Dendritic cell treated with granulocyte-macrophage colony-stimulating factor and Interleukin-4, amounts not matched to agents 40 ng/mL and 50 ng/mL, for 4 days (primary cell): ENCODE measurements at regions of chr13 and their contacts with region 1.

Region 1: GRCh38 chr13:41465241-41465847 is 8.0 kb downstream of the RGCC start:
- H3K4me3 Mint-ChIP-seq: no peak overlapping the region
- H3K27ac Mint-ChIP-seq: peak overlapping the region; percentile 82
- H3K4me1 Mint-ChIP-seq: peaks cover 61% of the 10 kb centered on the region
- H3K27me3 Mint-ChIP-seq: no peaks in the 10 kb centered on the region

Region 2: GRCh38 chr13:41418027-41418426 is 47.3 kb before region 1 on chr13:
- intact Hi-C with region 1: no loop called
- H3K4me3 Mint-ChIP-seq: no peak overlapping the region
- H3K27ac Mint-ChIP-seq: no peak overlapping the region
- H3K4me1 Mint-ChIP-seq: no peaks in the 10 kb centered on the region
- H3K27me3 Mint-ChIP-seq: no peaks in the 10 kb centered on the region

Region 3: DNA sequence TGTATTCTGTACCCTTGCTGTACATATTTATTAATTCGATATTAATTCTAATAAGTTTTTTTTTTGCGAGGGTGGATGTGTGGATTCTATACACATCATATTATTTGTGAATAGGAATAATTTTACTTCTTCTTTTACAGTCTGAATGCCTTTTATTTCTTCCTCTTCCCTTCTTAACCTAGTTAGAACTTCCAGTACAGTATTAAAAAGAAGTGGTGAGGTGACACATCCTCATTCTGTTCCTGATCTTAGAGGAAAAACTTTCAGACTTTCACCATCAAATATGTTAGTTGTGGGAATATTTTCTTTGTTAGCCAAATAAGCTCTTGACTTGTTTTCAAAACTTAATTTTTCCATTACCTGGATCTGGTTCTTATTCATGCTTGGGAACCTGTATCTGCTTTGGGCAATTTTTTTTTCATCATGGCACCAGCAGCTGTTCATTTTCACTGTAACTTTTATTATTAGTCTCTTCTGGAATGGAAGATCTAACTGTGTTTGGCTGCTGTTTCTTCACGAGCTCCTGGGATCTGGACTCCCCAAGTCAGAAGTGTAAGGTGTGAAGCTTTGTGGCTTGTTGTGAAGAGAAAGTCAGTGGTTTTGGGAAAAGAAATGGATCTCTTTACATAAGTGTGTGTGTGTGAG is 25.1 kb after region 1 on chr13:
- intact Hi-C with region 1: loop called (anchors 2 kb)
- H3K4me3 Mint-ChIP-seq: no peak overlapping the region
- H3K27ac Mint-ChIP-seq: peak overlapping the region; percentile 86
- H3K4me1 Mint-ChIP-seq: peaks cover 39% of the 10 kb centered on the region
- H3K27me3 Mint-ChIP-seq: peaks cover 5% of the 10 kb centered on the region

Region 4: GRCh38 chr13:41520016-41520659 is 54.8 kb after region 1 on chr13:
- intact Hi-C with region 1: loop called (anchors 5 kb)
- H3K4me3 Mint-ChIP-seq: no peak overlapping the region
- H3K27ac Mint-ChIP-seq: peak overlapping the region; percentile 78
- H3K4me1 Mint-ChIP-seq: peaks cover 33% of the 10 kb centered on the region
- H3K27me3 Mint-ChIP-seq: no peaks in the 10 kb centered on the region

Region 5: DNA sequence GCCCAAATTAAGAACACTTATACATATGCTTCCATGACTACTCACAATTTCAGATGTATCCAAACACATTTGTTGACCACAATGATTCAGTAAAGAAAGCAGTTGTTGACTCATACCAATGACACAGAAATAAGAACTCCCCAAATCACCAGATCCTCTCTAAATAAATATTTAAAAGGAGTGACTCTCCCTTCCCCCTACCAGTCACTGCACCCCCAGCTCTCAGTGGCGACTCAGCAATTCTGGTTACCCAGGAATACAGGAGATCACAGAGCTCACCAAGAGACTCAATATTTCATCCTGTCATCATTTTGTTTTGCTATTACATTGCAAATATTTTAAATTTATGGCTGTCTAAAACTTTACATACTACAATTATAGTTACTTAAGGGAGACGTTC is 123.6 kb after region 1 on chr13:
- intact Hi-C with region 1: loop called (anchors 5 kb)
- H3K4me3 Mint-ChIP-seq: no peak overlapping the region
- H3K27ac Mint-ChIP-seq: peak overlapping the region; percentile 79
- H3K4me1 Mint-ChIP-seq: peaks cover 46% of the 10 kb centered on the region
- H3K27me3 Mint-ChIP-seq: no peaks in the 10 kb centered on the region